WTC11 (cell line): ENCODE measurements at regions of chr2 and their contacts with region 1.

Region 1: DNA sequence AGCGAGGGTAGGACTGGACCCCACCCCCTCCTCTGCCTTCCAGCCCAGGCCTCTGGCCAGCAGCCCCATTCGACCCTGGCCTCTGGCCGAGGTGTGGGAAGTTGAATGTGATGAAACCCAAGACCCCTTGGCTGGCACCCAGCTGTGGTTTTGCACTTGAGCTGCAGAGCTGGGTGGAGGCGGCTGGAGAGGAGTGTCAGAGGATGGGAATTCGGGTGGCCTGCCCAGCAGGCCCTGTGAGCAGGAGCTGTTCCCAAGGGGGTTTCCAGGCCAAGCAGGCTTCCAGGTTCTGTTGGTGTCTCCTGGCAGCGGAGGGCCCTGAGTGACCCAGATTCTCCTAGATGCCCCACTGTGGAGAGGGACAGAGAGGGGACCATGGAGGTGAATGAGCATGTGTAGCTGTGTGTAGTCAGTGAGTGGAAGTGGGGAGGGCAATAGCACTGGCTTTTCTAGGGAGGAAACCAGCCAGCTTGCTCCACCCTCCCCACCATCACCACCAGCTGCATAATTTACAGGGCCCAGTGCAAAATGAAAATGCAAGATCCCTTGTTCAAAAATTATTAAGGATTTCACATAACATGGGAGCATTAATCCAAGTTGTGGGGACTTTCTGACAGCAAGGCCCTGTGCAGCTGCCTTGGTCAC is 172.2 kb upstream of the HAAO start:
- DNase-seq: no peak
- ATAC-seq: no peak
- H3K4me3 Mint-ChIP-seq: no peak overlapping the region
- H3K27ac Mint-ChIP-seq: no peak overlapping the region
- H3K4me1 Mint-ChIP-seq: peaks cover 25% of the 10 kb centered on the region
- H3K27me3 Mint-ChIP-seq: no peaks in the 10 kb centered on the region
- CTCF ChIP-seq: no peak

Region 2: GRCh38 chr2:42974721-42975717 is 10.5 kb after region 1 on chr2:
- CTCF ChIA-PET with region 1: interaction called, 32 read pairs
- POLR2A ChIA-PET with region 1: no interaction called
- DNase-seq: peak; percentile 89
- ATAC-seq: peak; percentile 91
- H3K4me3 Mint-ChIP-seq: peak overlapping the region; percentile 64
- H3K27ac Mint-ChIP-seq: no peak overlapping the region
- H3K4me1 Mint-ChIP-seq: peaks cover 11% of the 10 kb centered on the region
- H3K27me3 Mint-ChIP-seq: no peaks in the 10 kb centered on the region; the same call in 1 of the 2 replicates
- CTCF ChIP-seq: peak; percentile 60

Region 3: DNA sequence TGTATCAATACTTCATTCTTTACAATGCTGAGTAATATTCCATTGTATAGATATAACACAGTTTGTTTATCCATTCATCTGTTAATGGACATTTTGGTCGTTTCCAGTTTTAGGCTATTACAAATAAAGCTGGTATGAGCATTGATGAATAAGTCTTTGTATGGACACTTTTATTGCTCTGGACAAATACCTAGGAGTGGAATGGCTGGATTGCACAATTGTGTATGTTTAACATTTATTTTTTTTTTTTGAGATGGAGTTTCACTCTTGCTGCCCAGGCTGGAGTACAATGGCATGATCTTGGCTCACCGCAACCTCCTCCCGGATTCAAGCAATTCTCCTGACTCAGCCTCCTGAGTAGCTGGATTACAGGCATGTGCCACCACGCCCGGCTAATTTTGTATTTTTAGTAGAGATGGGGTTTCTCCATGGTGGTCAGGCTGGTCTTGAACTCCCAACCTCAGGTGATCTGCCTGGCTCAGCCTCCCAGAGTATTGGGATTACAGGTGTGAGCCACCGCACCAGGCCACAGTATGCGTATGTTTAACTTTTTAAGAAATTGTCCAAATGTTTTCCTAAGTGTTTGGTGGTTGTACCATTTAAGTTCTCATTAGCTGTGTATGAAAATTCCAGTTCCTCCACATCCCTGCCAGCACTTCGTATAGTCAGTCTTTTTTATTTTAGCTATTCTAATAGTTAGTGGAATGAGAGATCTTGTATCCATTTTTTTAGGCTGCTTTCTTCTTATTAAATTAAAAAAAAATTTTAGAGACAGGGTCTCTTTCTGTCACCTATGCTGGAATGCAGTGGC is 22.8 kb after region 1 on chr2:
- CTCF ChIA-PET with region 1: no interaction called
- POLR2A ChIA-PET with region 1: no interaction called
- DNase-seq: no peak
- ATAC-seq: no peak
- H3K4me3 Mint-ChIP-seq: no peak overlapping the region
- H3K27ac Mint-ChIP-seq: no peak overlapping the region
- H3K4me1 Mint-ChIP-seq: peaks cover 11% of the 10 kb centered on the region
- H3K27me3 Mint-ChIP-seq: peaks cover 3% of the 10 kb centered on the region; the same call in 1 of the 2 replicates
- CTCF ChIP-seq: no peak